ENCODE measurements at regions of chr11 and their contacts with region 1.

Region 1: DNA sequence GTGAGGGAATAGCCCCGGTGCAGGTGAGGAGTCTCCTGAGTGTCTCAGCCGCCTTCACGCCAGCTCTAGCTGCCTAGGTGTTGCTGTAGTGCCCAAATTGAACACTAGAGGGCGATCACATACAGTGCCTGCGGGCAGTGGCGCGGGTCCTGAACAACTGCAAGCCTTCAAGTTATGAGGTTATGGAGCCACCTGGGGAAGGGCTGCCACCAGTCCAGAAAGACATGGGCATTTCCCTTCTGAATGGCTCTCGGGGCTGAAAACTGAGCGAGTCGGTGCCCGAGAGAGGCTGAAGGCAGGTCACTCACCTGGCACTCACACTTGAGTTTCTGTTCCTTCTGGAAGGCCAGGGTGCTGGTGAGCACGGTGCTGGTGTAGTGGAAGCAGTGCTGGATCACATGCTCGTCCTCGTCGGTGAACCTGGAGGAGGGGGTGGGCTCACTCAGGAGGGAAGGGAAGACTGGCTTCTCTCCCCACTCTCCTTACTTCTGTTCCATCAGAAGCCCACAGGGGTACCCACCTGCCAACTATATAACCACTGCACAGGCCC is 88.4 kb downstream of the PDE2A start:
- DNase-seq: peak; percentile 70
- ATAC-seq: peak; percentile 71
- H3K4me3 Mint-ChIP-seq: no peak overlapping the region
- H3K27ac Mint-ChIP-seq: no peak overlapping the region
- H3K4me1 Mint-ChIP-seq: peaks cover 41% of the 10 kb centered on the region
- H3K27me3 Mint-ChIP-seq: peaks cover 37% of the 10 kb centered on the region

Region 2: GRCh38 chr11:72483412-72484186 is 102.2 kb before region 1 on chr11:
- CTCF ChIA-PET with region 1: interaction called, 10 read pairs
- DNase-seq: no peak
- ATAC-seq: peak; percentile 49
- H3K4me3 Mint-ChIP-seq: no peak overlapping the region
- H3K27ac Mint-ChIP-seq: peak overlapping the region; percentile 40
- H3K4me1 Mint-ChIP-seq: peaks cover 16% of the 10 kb centered on the region
- H3K27me3 Mint-ChIP-seq: peaks cover 8% of the 10 kb centered on the region

Region 3: GRCh38 chr11:72599325-72600122 is 13.7 kb after region 1 on chr11:
- CTCF ChIA-PET with region 1: interaction called, 112 read pairs
- DNase-seq: no peak
- ATAC-seq: peak; percentile 20
- H3K4me3 Mint-ChIP-seq: no peak overlapping the region
- H3K27ac Mint-ChIP-seq: no peak overlapping the region
- H3K4me1 Mint-ChIP-seq: peaks cover 4% of the 10 kb centered on the region
- H3K27me3 Mint-ChIP-seq: peaks cover 30% of the 10 kb centered on the region

Region 4: GRCh38 chr11:72621008-72621610 is 35.3 kb after region 1 on chr11:
- CTCF ChIA-PET with region 1: interaction called, 20 read pairs
- DNase-seq: peak; percentile 72
- ATAC-seq: peak; percentile 85
- H3K4me3 Mint-ChIP-seq: no peak overlapping the region
- H3K27ac Mint-ChIP-seq: peak overlapping the region; percentile 65
- H3K4me1 Mint-ChIP-seq: peaks cover 35% of the 10 kb centered on the region
- H3K27me3 Mint-ChIP-seq: peaks cover 9% of the 10 kb centered on the region

Region 5: DNA sequence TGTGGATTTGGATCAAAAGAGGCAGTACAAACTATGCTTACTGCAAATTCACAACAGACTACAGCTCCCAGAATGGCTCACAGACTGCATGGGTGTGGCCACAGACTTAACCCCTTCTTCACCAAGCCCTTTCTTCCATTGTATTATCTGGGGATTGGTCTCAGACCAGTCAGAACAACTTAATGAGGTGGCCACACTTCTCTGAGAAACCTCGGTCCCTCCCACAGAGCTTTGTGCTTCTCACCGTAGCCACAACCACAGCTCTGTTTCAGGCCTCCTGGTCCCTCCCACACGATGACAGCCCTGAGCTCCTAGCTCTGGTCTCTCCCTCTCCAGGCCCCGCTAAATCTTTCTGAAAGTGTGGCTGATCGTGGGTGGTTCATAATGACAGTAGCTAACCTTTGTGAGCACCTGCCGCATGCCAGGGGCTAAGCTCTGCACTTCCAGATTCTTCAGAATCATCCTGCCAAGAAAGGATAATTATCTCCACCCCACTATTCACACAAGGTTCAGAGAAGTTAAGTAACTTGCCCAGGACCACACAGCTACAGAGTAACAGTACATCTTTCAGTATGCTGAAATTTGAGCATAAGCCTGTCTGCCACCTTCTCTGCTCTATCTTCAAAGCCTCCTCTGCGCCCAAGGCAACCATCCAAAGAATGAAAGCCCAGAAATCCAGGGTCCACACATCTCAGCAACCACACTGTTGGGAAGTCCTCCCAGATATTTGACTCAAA is 82.9 kb after region 1 on chr11:
- CTCF ChIA-PET with region 1: interaction called, 203 read pairs
- DNase-seq: peak; percentile 94
- ATAC-seq: peak; percentile 94
- H3K4me3 Mint-ChIP-seq: no peak overlapping the region
- H3K27ac Mint-ChIP-seq: peak overlapping the region; percentile 69
- H3K4me1 Mint-ChIP-seq: peaks cover 34% of the 10 kb centered on the region
- H3K27me3 Mint-ChIP-seq: peaks cover 45% of the 10 kb centered on the region